Activated T-helper 1 cell treated with anti-CD3 and anti-CD28 coated beads, Interleukin-12 subunit alpha, Interleukin-12 subunit beta, Interleukin-2, Interleukin-4 antibody, amounts not matched to agents 30 ng/mL and 10 ng/mL and 1 ng/mL, durations not matched to agents 14 hours and 24 hours and 36 hours (primary cell): ENCODE measurements at regions of chr6 and their contacts with region 1.

Region 1: DNA sequence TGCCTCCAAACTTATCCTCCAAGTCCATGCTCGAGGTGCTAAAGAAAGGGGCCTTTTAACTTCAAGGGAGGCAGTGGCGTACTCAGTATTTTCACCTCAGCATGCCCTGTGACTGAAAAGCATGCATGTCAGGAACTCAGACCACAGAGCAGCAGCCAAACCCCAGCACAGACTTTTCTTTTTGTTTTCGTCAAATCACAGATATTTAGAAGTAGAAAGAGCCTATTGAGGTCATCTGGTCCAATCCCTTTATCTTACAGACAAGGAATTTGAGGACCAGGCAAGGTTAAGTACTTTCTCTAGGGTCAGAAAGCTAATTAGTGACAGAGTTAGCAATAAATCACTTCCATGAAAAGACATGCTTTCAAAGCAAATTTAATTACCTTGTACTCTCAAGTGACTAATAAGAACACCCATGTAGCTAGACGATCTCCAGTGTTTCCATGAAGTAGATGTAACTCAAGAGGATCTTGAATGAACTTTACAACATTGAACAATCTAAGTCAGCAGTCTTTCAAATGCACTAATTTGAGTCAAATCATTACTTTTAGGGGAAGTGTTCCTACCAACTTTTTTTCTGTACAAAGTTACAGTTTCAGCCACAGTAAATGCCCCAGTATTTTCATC is 35.9 kb downstream of the MOXD1 start:
- DNase-seq: no peak
- H3K4me3 Mint-ChIP-seq: peak overlapping the region; percentile 45
- H3K27ac Mint-ChIP-seq: peak overlapping the region; percentile 84
- H3K4me1 Mint-ChIP-seq: peaks cover 37% of the 10 kb centered on the region
- H3K27me3 Mint-ChIP-seq: peaks cover 19% of the 10 kb centered on the region

Region 2: GRCh38 chr6:132300323-132300949 is 65.0 kb before region 1 on chr6:
- intact Hi-C with region 1: loop called (anchors 1 kb)
- DNase-seq: no peak
- H3K4me3 Mint-ChIP-seq: no peak overlapping the region
- H3K27ac Mint-ChIP-seq: no peak overlapping the region
- H3K4me1 Mint-ChIP-seq: no peaks in the 10 kb centered on the region
- H3K27me3 Mint-ChIP-seq: peaks cover 17% of the 10 kb centered on the region

Region 3: GRCh38 chr6:132322398-132322797 is 43.0 kb before region 1 on chr6:
- intact Hi-C with region 1: loop called (anchors 1 kb)
- DNase-seq: no peak
- H3K4me3 Mint-ChIP-seq: no peak overlapping the region
- H3K27ac Mint-ChIP-seq: no peak overlapping the region
- H3K4me1 Mint-ChIP-seq: no peaks in the 10 kb centered on the region
- H3K27me3 Mint-ChIP-seq: peaks cover 10% of the 10 kb centered on the region

Region 4: DNA sequence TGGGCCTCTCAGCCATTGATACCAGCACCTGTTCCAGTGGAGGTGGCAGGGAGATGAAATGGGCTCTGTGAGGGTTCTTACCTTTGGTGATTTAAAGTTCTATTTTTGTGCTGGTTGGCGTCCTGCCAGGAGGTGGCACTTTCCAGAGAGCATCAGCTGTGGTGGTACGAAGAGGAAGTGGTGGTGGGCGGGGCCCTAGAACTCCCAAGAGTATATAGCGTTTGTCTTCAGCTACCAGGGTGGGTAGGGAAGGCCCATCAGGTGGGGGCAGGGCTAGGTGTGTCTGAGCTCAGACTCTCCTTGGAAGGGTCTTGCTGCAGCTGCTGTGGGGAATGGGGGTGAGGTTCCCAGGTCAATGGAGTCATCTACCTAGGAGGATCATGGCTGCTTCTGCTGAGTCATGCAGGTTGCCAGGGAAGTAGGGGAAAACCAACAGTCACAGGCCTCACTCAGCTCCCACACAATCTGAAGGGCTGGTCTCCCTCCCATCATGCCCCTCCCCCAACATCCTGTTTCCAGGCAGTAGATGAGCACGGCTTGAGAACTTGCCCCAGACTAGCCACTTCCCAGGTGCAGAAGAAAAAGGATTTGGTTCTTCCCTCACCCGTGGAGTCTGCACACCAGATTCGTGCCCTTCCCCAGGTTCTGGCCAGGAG is 10.8 kb before region 1 on chr6:
- intact Hi-C with region 1: loop called (anchors 1 kb)
- DNase-seq: peak; percentile 12
- H3K4me3 Mint-ChIP-seq: no peak overlapping the region
- H3K27ac Mint-ChIP-seq: peak overlapping the region; percentile 62
- H3K4me1 Mint-ChIP-seq: peaks cover 44% of the 10 kb centered on the region
- H3K27me3 Mint-ChIP-seq: peaks cover 3% of the 10 kb centered on the region

Region 5: GRCh38 chr6:132404736-132405135 is 39.3 kb after region 1 on chr6:
- intact Hi-C with region 1: loop called (anchors 1 kb)
- DNase-seq: no peak
- H3K4me3 Mint-ChIP-seq: no peak overlapping the region
- H3K27ac Mint-ChIP-seq: no peak overlapping the region
- H3K4me1 Mint-ChIP-seq: peaks cover 31% of the 10 kb centered on the region
- H3K27me3 Mint-ChIP-seq: peaks cover 55% of the 10 kb centered on the region

Region 6: DNA sequence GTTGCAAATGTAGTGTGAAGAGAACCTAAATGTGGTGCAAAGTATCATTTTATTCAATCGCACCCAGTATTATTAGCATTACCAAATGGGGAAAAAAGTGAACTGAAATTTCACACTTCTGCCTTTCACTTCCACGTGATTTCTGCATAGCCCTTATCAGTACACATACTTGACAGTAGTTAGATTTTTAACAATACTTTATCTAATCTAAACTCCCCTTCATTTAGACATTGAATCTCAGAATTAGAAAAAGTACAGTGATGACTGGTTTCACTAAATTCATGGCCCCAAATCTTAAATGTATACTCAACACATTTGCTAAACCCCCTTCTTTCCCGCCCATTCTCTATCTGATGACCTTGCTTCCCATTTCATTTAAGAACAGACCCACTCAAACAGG is 133.2 kb after region 1 on chr6:
- intact Hi-C with region 1: loop called (anchors 5 kb)
- DNase-seq: no peak
- H3K4me3 Mint-ChIP-seq: no peak overlapping the region
- H3K27ac Mint-ChIP-seq: no peak overlapping the region
- H3K4me1 Mint-ChIP-seq: peaks cover 33% of the 10 kb centered on the region
- H3K27me3 Mint-ChIP-seq: no peaks in the 10 kb centered on the region